ENCODE measurements at regions of chr12 and their contacts with region 1.

Region 1: GRCh38 chr12:61993734-61994345 is 266.4 kb upstream of the USP15 start:
- DNase-seq: no peak
- H3K4me3 ChIP-seq: no peak overlapping the region
- H3K27ac ChIP-seq: no peak overlapping the region
- H3K4me1 ChIP-seq: no peaks in the 10 kb centered on the region
- H3K27me3 ChIP-seq: no peaks in the 10 kb centered on the region
- CTCF ChIP-seq: peak in 2 of 3 experiments; percentile 70 to 82; a peak in 3 of 4 replicates
- EP300 ChIP-seq: no peak
- POLR2A ChIP-seq: no peak
- RAD21 ChIP-seq: peak; percentile 97

Region 2: DNA sequence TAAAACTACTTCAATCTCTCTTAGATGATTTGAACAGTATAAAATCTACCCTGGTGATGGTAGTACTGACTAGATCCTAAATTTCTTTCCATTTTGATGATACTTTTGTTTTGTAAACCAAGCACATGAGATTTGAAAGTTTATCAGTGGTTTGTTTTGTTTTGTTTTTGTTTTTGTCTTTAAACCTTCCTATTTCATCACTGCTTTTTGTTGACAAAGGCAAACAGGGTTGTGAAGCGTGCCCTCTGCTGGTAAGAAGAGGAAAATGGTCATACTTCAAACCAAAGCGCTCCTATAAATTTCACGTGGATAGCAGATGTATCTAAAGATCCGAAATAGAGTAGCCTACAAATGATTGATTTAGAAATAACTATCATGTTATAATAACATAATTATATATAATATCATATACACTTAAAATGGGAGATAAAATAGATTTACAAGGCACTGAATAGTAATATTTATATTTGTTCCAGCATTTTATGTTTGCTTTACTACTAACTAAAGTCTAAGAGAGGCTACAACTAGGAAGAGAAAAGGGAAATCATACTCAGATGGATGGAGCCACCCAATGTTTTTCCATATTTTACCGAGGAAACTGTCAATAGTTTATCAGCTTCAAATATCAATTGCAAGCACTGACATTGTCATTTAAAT is 12.4 kb after region 1 on chr12:
- CTCF ChIA-PET with region 1: interaction called, 11 read pairs
- POLR2A ChIA-PET with region 1: no interaction called
- DNase-seq: no peak
- H3K4me3 ChIP-seq: no peak overlapping the region
- H3K27ac ChIP-seq: no peak overlapping the region
- H3K4me1 ChIP-seq: no peaks in the 10 kb centered on the region; a peak in 1 of 7 replicates
- H3K27me3 ChIP-seq: peaks cover 0 to 1% (median 0%) of the 10 kb centered on the region in 4 experiments; a peak in 1 of 7 replicates
- CTCF ChIP-seq: peak in 2 of 3 experiments; percentile 55 to 64; a peak in 3 of 4 replicates
- EP300 ChIP-seq: no peak
- POLR2A ChIP-seq: no peak
- RAD21 ChIP-seq: peak; percentile 64 to 72

Measured in H1 (cell line).